H1 (cell line): ENCODE measurements at regions of chr5 and their contacts with region 1.

Region 1: DNA sequence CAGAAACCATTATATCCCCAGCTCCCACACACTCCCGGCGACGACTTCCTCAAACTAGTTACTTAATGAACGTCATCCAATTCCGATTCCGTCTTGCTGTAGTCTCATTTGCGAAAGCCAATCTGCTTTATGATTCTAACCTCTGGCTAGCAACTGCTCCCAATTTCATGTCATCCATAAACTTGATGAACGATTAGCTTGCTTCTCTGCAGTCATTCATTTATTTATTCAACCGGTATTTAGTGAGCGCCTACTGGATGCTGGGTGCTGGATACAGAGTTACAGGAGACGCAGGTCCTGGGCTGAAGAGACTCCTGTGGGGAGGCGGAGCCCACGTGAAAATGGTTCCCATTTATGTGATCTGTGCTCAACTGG is 46.2 kb downstream of the TSPAN17 start:
- DNase-seq: no peak
- H3K4me3 ChIP-seq: no peak overlapping the region
- H3K27ac ChIP-seq: no peak overlapping the region
- H3K4me1 ChIP-seq: peaks cover 16 to 37% (median 28%) of the 10 kb centered on the region in 4 experiments
- H3K27me3 ChIP-seq: peaks cover 0 to 3% (median under 1%) of the 10 kb centered on the region in 4 experiments; a peak in 4 of 7 replicates
- CTCF ChIP-seq: no peak
- EP300 ChIP-seq: no peak
- POLR2A ChIP-seq: no peak
- RAD21 ChIP-seq: no peak

Region 2: GRCh38 chr5:176355400-176356178 is 337.9 kb before region 1 on chr5:
- CTCF ChIA-PET with region 1: no interaction called
- POLR2A ChIA-PET with region 1: no interaction called
- DNase-seq: no peak
- H3K4me3 ChIP-seq: no peak overlapping the region
- H3K27ac ChIP-seq: 0 out of 2 replicates have a peak overlapping the region, but pooled peaks have one; percentile 52
- H3K4me1 ChIP-seq: no peaks in the 10 kb centered on the region; a peak in 1 of 7 replicates
- H3K27me3 ChIP-seq: no peaks in the 10 kb centered on the region
- CTCF ChIP-seq: peak; percentile 11 to 55 (median 41); a peak in 3 of 4 replicates
- EP300 ChIP-seq: no peak
- POLR2A ChIP-seq: no peak
- RAD21 ChIP-seq: peak in 1 of 2 experiments; percentile 27; a peak in 1 of 4 replicates

Region 3: DNA sequence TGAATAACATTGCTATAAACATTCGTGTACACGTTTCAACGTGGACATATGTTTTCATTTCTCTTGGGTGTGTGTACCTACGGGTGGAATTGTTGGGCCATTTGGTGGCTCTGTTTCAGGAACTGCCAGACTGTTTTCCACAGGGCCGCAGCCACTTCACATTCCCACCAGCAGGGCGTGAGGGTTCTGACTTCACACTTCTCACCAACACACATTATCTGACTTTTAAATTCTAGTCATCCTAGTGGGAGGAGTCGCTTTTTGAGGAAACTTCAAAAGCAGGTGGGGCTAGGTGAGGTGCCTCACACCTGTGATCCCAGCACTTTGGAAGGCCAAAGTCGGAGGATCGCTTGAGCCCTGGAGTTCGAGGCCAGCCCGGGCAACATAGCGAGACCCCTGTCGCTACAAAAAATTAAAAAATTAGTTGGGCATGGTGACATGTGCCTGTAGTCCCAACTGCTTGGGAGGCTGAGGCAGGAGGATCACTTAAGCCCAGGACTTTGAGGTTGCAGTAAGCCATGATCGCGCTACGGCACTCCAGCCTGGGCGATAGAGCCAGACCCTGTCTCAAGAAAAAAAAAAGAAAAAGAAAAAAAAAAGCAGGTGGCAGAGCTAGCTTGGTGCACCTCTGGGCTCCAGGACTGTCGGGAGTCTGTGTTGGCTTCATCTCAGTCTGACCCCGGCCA is 17.6 kb before region 1 on chr5:
- CTCF ChIA-PET with region 1: interaction called, 859 read pairs
- POLR2A ChIA-PET with region 1: interaction called, 13 read pairs
- DNase-seq: peak in 1 of 2 experiments; percentile 74
- H3K4me3 ChIP-seq: no peak overlapping the region
- H3K27ac ChIP-seq: no peak overlapping the region
- H3K4me1 ChIP-seq: peaks cover 0 to 17% (median 11%) of the 10 kb centered on the region in 4 experiments; a peak in 6 of 7 replicates
- H3K27me3 ChIP-seq: peaks cover 0 to 18% (median 17%) of the 10 kb centered on the region in 4 experiments; a peak in 6 of 7 replicates
- CTCF ChIP-seq: peak in 2 of 3 experiments; percentile 65 to 86; a peak in 3 of 4 replicates
- EP300 ChIP-seq: no peak
- POLR2A ChIP-seq: no peak
- RAD21 ChIP-seq: peak; percentile 39 to 56

Region 4: GRCh38 chr5:176762489-176762888 is 69.0 kb after region 1 on chr5:
- CTCF ChIA-PET with region 1: no interaction called
- POLR2A ChIA-PET with region 1: no interaction called
- DNase-seq: peak in 1 of 2 experiments; percentile 43
- H3K4me3 ChIP-seq: no peak overlapping the region
- H3K27ac ChIP-seq: no peak overlapping the region
- H3K4me1 ChIP-seq: no peaks in the 10 kb centered on the region
- H3K27me3 ChIP-seq: no peaks in the 10 kb centered on the region
- CTCF ChIP-seq: peak in 2 of 3 experiments; percentile 12 to 20; a peak in 2 of 4 replicates
- EP300 ChIP-seq: no peak
- POLR2A ChIP-seq: no peak
- RAD21 ChIP-seq: peak in 1 of 2 experiments; percentile 10; a peak in 1 of 4 replicates